Spleen (tissue), 13 donors: ENCODE measurements at regions of chr4 and their contacts with region 1.

Region 1: GRCh38 chr4:139030614-139031235 is 15.1 kb downstream of the NOCT start:
- DNase-seq: no peak
- H3K4me3 ChIP-seq: no peak overlapping the region
- H3K27ac ChIP-seq: peak overlapping the region in 2 of 8 donors; percentile 9 to 18
- H3K4me1 ChIP-seq: peaks cover 0 to 66% (median 12%) of the 10 kb centered on the region in 6 donors
- H3K27me3 ChIP-seq: no peaks in the 10 kb centered on the region
- CTCF ChIP-seq: peak; percentile 45 to 90 (median 78)
- POLR2A ChIP-seq: no peak

Region 2: DNA sequence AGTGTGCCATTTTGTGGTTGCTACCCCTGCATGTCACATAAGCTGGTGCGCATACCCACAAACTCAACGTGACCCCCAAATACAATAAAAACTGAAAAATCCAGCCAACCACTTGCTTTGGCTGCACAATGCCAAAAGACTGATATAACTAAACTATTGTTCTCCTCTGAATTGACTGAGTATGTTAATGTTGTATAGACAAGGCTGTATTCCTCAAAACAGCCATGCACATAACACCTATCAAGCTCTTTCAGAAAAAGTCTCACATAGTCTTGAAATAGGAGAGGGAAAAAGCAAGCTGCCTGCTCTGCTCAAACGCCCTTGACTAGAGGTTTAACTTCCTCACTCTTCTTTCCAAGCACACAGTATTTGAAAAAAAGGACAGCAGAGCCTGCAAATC is 141.5 kb before region 1 on chr4:
- intact Hi-C with region 1: no loop called
- DNase-seq: no peak
- H3K4me3 ChIP-seq: no peak overlapping the region
- H3K27ac ChIP-seq: no peak overlapping the region
- H3K4me1 ChIP-seq: no peaks in the 10 kb centered on the region
- H3K27me3 ChIP-seq: no peaks in the 10 kb centered on the region
- CTCF ChIP-seq: no peak
- POLR2A ChIP-seq: no peak

Region 3: DNA sequence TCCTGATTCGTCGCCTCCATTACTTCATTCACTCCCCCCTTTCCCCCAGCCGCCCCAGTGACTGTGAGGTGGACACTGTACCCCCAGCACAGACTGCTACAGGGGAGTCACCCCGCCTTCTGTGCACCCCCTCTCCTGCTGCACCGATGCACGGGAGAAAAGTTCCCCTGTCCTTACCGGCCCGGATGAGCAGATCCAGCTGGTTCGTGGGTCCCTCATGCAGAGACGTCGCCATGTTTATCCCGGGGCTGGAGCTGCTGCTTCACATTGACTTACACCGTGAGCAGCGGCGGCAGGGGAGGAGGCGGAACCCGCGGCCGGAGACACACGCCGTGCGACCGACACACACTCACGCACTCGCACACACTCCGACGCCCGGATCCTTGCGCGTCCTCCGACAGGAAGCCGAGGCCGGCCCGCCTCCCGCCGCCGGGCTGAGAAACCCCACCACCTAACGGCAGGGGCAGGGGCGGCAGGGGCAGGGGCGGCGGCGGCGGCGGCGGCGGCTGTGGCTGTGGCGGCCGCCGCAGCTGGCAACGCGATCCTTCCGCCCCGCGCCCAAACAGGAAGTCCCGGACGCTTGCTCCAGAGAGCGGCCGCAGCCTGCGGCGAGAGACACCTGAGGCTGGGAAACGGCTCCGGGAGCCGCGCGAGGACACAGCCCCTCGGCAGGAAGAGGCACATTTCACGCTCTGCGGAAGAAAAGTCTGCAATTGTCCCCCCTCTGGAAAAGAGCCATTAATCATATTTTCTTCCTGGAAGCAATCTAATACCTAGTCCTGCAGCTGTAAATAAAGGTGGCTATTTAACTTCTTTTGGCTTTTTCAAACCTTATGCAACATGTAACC is 53.5 kb after region 1 on chr4:
- intact Hi-C with region 1: loop called (anchors 10 kb)
- DNase-seq: peak; percentile 97
- H3K4me3 ChIP-seq: peak overlapping the region; percentile 57 to 96 (median 88)
- H3K27ac ChIP-seq: peak overlapping the region; percentile 90 to 97 (median 96)
- H3K4me1 ChIP-seq: peaks cover 22 to 51% (median 47%) of the 10 kb centered on the region in 6 donors
- H3K27me3 ChIP-seq: no peaks in the 10 kb centered on the region
- CTCF ChIP-seq: peak in 7 of 11 experiments; percentile 7 to 71 (median 51)
- POLR2A ChIP-seq: peak in 1 of 3 donors; percentile 7

Region 4: DNA sequence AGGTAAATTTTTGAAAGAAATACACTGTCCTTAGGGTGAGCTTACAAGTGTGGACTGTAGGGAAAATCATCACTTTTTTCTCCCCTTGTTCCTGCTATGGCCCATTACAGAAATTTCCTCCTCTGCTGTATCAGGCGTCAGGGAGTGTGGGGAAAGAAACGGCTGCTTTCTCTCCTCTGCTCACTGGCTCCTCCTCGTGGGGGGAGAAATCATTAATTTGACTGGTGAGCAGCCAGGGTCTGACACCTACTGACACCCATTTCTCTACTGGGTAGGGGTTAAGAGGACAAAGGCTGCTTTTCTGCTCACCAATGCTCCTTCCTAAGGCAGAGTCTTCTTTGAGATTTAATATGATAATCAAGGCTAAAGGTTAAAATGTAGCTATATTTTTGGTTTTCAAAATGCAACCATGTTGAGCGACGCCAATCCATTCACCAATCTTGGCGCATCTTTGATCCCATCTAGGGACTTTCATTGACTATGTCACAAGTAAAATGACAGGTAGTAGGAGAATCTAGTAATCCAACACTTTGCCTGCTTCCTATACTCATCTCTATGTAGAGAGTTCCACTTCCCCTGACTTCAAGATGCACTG is 500.2 kb after region 1 on chr4:
- intact Hi-C with region 1: loop called (anchors 10 kb)
- DNase-seq: no peak
- H3K4me3 ChIP-seq: no peak overlapping the region
- H3K27ac ChIP-seq: no peak overlapping the region
- H3K4me1 ChIP-seq: peaks cover 0 to 32% (median 4%) of the 10 kb centered on the region in 6 donors
- H3K27me3 ChIP-seq: no peaks in the 10 kb centered on the region
- CTCF ChIP-seq: peak in 9 of 11 experiments; percentile 40 to 66 (median 59)
- POLR2A ChIP-seq: no peak

Region 5: DNA sequence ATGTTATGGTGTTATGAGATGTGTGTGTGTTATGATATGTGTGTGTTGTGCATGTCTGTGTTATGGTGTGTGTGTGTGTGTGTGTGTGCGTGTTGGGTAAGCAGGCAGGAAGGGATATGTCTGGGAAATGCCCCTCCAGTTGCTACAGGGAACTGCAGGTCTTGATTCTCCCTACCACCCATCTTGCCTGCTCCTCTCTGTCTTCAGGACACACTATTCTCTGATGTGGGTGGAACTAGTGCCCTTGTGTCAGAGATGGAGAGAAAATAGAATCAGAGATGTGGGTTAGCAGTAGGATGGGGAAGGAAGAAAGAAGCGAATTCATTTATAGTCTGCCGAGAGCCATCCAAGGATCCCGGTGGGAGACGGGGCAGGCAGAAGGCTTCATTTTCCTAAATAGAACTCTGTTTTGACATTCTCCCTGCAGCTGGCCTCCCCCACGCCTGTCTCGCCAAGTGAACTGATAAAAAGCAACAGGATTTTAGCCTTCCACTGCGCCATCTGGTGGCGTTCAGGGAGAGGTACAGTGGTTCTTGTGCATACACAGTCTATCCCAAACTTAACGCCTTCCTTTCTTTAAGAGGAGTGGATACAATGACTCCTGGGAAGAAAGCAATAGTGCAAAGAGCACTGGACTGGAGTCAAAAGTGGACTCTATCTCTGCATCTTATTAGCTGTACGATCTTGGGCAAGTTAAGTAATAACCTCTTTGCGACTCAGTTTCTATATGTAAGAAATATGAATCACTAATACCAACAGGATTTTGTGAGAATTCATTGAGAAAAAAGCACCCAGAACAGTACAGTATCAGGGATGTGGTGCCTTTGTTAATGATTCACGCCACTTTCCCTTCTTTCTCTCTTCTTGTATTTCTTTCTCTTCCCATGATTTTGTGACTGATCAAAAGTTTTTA is 620.8 kb after region 1 on chr4:
- intact Hi-C with region 1: loop called (anchors 10 kb)
- DNase-seq: peak; percentile 89
- H3K4me3 ChIP-seq: peak overlapping the region in 1 of 8 donors; percentile 33
- H3K27ac ChIP-seq: no peak overlapping the region
- H3K4me1 ChIP-seq: peaks cover 0 to 7% (median 5%) of the 10 kb centered on the region in 6 donors
- H3K27me3 ChIP-seq: no peaks in the 10 kb centered on the region
- CTCF ChIP-seq: peak; percentile 73 to 95 (median 89)
- POLR2A ChIP-seq: no peak